PC-3 (cell line): ENCODE measurements at regions of chr1 and their contacts with region 1.

Region 1: GRCh38 chr1:61083807-61084440 is 1.6 kb downstream of the NFIA start:
- DNase-seq: peak; percentile 30
- ATAC-seq: no peak
- H3K4me3 ChIP-seq: peak overlapping the region; percentile 74
- H3K27ac ChIP-seq: 0 out of 2 replicates have a peak overlapping the region, but pooled peaks have one; percentile 5
- H3K4me1 ChIP-seq: peaks cover 50% of the 10 kb centered on the region
- H3K27me3 ChIP-seq: no peaks in the 10 kb centered on the region
- CTCF ChIP-seq: no peak

Region 2: DNA sequence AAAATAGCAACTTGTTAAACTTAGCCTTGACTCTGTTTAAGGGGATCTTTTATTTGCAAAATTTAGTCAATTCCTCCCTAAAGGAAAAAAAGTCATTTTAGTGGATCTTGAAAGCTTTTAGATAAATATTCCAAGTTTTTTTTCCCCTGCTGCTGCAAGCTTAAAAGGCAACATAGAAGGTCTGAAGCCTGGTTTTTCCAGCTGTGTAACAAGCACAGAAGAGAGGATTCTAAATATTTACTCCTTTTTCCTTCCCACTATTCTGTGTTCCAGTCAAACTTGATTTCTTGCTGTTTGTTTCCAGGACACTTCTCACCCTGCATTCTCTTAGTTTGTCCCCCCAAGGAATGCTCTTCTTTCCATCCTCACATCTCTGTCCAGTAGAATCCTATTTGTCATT is 85.1 kb after region 1 on chr1:
- CTCF ChIA-PET with region 1: no interaction called
- POLR2A ChIA-PET with region 1: interaction called, 14 read pairs
- intact Hi-C with region 1: no loop called
- DNase-seq: no peak
- ATAC-seq: no peak
- H3K4me3 ChIP-seq: no peak overlapping the region
- H3K27ac ChIP-seq: no peak overlapping the region
- H3K4me1 ChIP-seq: peaks cover 11% of the 10 kb centered on the region; the same call in 1 of the 2 replicates
- H3K27me3 ChIP-seq: no peaks in the 10 kb centered on the region
- CTCF ChIP-seq: no peak

Region 3: GRCh38 chr1:61184040-61184713 is 100.3 kb after region 1 on chr1:
- CTCF ChIA-PET with region 1: no interaction called
- POLR2A ChIA-PET with region 1: no interaction called
- intact Hi-C with region 1: no loop called
- DNase-seq: peak; percentile 56
- ATAC-seq: no peak
- H3K4me3 ChIP-seq: no peak overlapping the region
- H3K27ac ChIP-seq: no peak overlapping the region
- H3K4me1 ChIP-seq: peaks cover 11% of the 10 kb centered on the region
- H3K27me3 ChIP-seq: no peaks in the 10 kb centered on the region
- CTCF ChIP-seq: no peak